GM12878 (cell line): ENCODE measurements at regions of chr5 and their contacts with region 1.

Region 1: GRCh38 chr5:129003226-129003625 is 37.9 kb downstream of the SLC27A6 start:
- DNase-seq: no peak
- ATAC-seq: peak; percentile 37
- H3K4me3 ChIP-seq: no peak overlapping the region
- H3K27ac ChIP-seq: no peak overlapping the region
- H3K4me1 ChIP-seq: no peaks in the 10 kb centered on the region
- H3K27me3 ChIP-seq: no peaks in the 10 kb centered on the region
- CTCF ChIP-seq: no peak
- EP300 ChIP-seq: no peak
- POLR2A ChIP-seq: no peak
- RAD21 ChIP-seq: no peak

Region 2: DNA sequence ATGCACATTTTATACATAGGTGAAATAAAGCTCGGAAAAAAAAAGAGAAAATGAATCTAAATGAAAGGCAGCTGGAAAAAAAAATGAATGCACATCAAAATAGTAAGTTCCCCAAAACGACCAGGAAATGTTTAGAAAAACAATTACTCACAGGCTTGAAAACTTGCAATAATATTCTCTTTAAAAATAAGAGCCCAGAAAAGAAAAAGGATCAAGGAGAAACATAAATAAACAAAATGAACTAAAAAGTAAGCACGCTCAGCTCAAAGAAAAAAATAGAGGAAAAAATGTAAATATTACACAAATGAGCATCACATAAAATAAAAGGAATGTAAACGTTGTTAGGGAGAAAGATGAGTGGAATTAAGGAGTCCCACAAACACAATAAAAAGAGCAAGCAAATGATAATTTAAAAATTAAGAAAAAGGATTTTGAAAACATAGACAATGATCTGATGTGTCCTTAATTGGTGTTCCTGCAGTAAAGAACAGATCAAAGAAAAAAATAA is 16.2 kb after region 1 on chr5:
- CTCF ChIA-PET with region 1: no interaction called
- POLR2A ChIA-PET with region 1: no interaction called
- RAD21 ChIA-PET with region 1: no interaction called
- SMC1A ChIA-PET with region 1: interaction called, 3 read pairs
- in situ Hi-C with region 1: no loop called
- intact Hi-C with region 1: loop called (anchors 1 kb)
- DNase-seq: no peak
- ATAC-seq: no peak
- H3K4me3 ChIP-seq: no peak overlapping the region
- H3K27ac ChIP-seq: no peak overlapping the region
- H3K4me1 ChIP-seq: no peaks in the 10 kb centered on the region
- H3K27me3 ChIP-seq: no peaks in the 10 kb centered on the region
- CTCF ChIP-seq: no peak
- EP300 ChIP-seq: no peak
- POLR2A ChIP-seq: no peak
- RAD21 ChIP-seq: no peak

Region 3: DNA sequence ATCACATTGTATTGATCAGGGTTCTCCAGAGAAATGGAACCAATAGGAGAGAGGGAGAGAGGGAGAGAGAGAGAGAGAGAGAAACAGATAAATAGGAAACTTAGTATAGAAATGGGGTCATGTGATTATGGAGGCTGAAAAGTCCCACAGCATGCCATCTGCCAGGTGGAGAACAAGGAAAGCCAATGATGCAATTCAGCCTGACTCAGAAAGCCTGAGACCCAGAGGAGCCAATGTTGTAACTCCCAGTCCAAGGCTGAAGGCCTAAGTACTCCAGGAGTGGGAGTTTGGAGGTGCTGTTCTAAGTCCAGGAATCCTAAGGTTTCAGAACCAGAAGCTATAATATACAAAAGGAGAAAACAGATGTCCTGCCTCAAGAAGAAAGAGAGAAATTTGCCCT is 42.9 kb after region 1 on chr5:
- CTCF ChIA-PET with region 1: no interaction called
- POLR2A ChIA-PET with region 1: no interaction called
- RAD21 ChIA-PET with region 1: no interaction called
- SMC1A ChIA-PET with region 1: no interaction called
- in situ Hi-C with region 1: no loop called
- intact Hi-C with region 1: no loop called
- DNase-seq: no peak
- ATAC-seq: no peak
- H3K4me3 ChIP-seq: no peak overlapping the region
- H3K27ac ChIP-seq: no peak overlapping the region
- H3K4me1 ChIP-seq: no peaks in the 10 kb centered on the region
- H3K27me3 ChIP-seq: no peaks in the 10 kb centered on the region
- CTCF ChIP-seq: no peak
- EP300 ChIP-seq: no peak
- POLR2A ChIP-seq: no peak
- RAD21 ChIP-seq: no peak